ENCODE measurements at regions of chr9 and their contacts with region 1.

Region 1: GRCh38 chr9:110241260-110241857 is 14.9 kb downstream of the TXN start:
- DNase-seq: no peak
- ATAC-seq: no peak
- H3K4me3 Mint-ChIP-seq: no peak overlapping the region
- H3K27ac Mint-ChIP-seq: no peak overlapping the region
- H3K4me1 Mint-ChIP-seq: no peaks in the 10 kb centered on the region
- H3K27me3 Mint-ChIP-seq: no peaks in the 10 kb centered on the region
- CTCF ChIP-seq: no peak

Region 2: DNA sequence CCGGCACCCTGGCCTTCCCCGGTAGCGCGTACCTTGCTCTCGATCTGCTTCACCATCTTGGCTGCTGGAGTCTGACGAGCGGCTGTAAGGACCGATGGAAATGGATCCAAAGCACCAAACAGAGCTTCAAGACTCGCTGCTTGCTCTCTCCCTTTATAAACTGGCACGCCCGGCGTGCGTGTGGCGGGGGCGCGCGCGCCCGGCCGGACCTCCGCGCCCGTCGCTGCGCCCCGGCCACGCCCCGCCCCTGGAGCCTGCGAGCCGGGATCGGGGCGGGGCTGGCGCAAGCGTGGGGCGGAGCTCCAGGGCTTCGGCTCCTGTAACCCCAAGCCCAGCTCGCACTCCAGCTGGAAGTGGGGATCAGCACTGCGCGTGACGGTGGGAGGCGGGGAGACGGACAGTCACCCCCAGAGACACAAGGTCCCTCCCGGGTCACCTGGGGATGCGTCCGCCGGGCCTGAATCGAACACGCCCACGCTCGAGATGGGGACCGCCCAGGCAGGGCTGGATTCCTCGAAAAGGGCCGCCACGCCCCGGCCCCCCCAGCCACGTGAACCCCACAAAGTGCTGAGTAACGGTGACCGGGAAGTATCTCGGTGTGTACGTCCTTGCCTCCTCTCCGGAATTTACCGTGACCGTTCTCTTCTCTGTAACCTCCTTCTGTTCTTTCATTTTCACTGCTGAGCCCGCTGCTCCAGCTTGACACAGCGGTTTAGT is 15.2 kb after region 1 on chr9 and contains the start of gene TXN:
- CTCF ChIA-PET with region 1: no interaction called
- POLR2A ChIA-PET with region 1: interaction called, 10 read pairs
- intact Hi-C with region 1: no loop called
- DNase-seq: peak; percentile 92
- ATAC-seq: peak; percentile 88
- H3K4me3 Mint-ChIP-seq: peak within 1 kb of the TSS; percentile 96
- H3K27ac Mint-ChIP-seq: peak within 1 kb of the TSS; percentile 99
- H3K4me1 Mint-ChIP-seq: peaks cover 43% of the 10 kb centered on the region
- H3K27me3 Mint-ChIP-seq: no peaks in the 10 kb centered on the region
- CTCF ChIP-seq: no peak
- total RNA-seq, gene TXN: 398 to 407 TPM

Measured in activated CD8-positive, alpha-beta T cell treated with anti-CD3 and anti-CD28 coated beads for 36 hours (primary cell).